ENCODE measurements at regions of chr2 and their contacts with region 1.

Region 1: GRCh38 chr2:120697471-120697870 is 38.2 kb upstream of the GLI2 start:
- DNase-seq: no peak
- H3K4me3 ChIP-seq: no peak overlapping the region
- H3K27ac ChIP-seq: no peak overlapping the region
- H3K4me1 ChIP-seq: no peaks in the 10 kb centered on the region
- H3K27me3 ChIP-seq: peaks cover 98% of the 10 kb centered on the region
- CTCF ChIP-seq: no peak

Region 2: GRCh38 chr2:120625865-120626560 is 71.5 kb before region 1 on chr2:
- intact Hi-C with region 1: no loop called
- DNase-seq: no peak
- H3K4me3 ChIP-seq: no peak overlapping the region
- H3K27ac ChIP-seq: no peak overlapping the region
- H3K4me1 ChIP-seq: peaks cover 3% of the 10 kb centered on the region
- H3K27me3 ChIP-seq: peaks cover 39% of the 10 kb centered on the region
- CTCF ChIP-seq: no peak

Region 3: DNA sequence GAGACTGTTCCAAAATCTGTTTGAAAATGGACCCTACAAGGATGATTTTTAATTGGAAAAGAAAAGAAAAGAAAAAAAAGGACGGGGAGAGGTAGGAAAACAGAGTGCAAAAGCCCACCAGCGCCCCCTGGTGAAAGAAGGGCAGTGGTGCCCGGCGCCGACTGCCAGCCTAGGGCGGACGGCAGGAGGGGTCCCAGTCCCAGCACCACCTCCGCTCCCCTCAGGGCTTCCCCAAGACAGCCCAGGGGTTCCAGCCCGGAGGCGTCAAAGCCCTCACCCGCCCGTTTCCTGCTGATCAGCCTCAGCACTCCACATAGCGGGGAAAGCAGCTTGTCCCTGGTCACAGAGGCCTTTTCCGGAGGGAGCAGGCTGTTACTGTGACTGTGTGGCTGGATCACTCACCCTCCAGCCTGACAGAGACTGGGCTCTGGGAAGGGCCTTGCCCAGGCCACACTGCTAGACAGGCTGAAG is 373.6 kb after region 1 on chr2:
- intact Hi-C with region 1: loop called (anchors 2 kb)
- DNase-seq: peak; percentile 68
- H3K4me3 ChIP-seq: no peak overlapping the region
- H3K27ac ChIP-seq: no peak overlapping the region
- H3K4me1 ChIP-seq: peaks cover 6% of the 10 kb centered on the region
- H3K27me3 ChIP-seq: peaks cover 76% of the 10 kb centered on the region
- CTCF ChIP-seq: peak; percentile 94